ENCODE measurements at regions of chr7 and their contacts with region 1.

Region 1: DNA sequence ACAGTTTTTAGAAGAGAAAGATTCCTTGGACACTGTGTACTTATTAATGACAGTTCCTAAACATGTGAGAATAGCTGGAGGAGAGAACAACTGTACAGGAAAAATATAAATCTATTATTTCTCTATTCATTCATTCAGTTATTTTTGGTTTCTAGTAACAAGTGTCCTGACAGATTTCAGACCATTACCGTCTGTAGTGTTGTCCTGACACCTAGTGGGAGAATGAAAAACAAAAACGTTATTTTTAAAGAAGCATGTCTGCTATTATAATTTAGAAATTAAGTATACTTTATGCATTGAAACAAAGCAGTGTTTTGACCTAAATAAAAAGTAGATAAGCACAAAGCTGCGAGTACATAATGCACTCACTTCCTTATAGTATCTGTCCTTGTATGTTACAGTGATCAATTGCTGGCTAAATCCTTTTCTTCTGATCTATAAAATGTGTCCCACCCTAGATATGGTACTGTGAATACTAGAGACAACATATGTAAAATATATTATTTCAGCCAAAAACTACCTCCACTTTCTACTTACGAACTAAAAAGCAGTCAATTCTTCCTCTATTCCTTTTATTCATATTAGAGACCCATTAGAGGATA is 575.6 kb downstream of the ARL4A start:
- DNase-seq: peak in 1 of 2 experiments; percentile 40
- H3K4me3 ChIP-seq: no peak overlapping the region
- H3K4me3 Mint-ChIP-seq: no peak overlapping the region
- H3K27ac Mint-ChIP-seq: no peak overlapping the region
- H3K4me1 ChIP-seq: no peaks in the 10 kb centered on the region
- H3K4me1 Mint-ChIP-seq: no peaks in the 10 kb centered on the region
- H3K27me3 ChIP-seq: no peaks in the 10 kb centered on the region
- H3K27me3 Mint-ChIP-seq: no peaks in the 10 kb centered on the region
- CTCF ChIP-seq: peak; percentile 43 to 54

Region 2: DNA sequence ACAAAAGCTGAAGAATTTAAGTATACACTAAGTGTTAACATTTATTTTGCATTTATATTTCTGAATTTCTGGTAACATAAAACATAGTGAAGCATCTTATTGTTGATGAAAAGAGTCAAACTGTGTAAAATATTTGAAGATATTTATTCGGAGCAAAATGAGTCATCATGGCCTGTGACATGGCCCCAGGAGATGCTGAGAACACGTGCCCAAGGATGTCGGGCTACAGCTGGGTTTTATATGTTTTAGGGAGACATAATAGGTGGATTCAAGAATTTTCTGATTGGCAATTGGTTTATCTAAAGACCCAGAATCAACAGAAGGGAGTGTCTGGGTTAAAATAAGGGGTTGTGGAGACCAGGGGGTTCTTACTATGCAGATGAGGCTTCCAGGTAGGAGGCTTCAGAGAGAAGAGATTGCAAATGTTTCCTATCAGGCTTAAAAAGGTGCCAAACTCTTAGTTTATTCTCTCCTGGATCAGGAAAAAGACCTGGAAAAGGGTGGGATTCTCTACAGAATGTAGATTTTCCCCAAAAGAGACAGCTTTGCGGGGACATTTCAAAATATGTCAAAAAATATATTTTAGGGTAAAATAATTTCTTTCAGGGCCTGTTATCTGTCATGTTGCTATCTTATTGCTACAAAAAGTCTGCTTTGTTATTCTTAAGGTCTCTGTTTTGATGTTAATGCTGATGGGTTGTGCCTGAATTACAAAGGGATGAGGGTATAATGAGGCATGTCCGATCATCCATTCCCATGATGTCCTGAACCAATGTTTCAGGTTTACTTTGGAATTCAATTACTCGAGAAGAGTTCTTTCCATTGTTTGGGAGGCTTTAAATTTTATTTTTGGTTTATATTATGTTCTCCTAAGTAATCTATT is 933.9 kb before region 1 on chr7:
- CTCF ChIA-PET with region 1: no interaction called
- POLR2A ChIA-PET with region 1: no interaction called
- intact Hi-C with region 1: no loop called
- DNase-seq: no peak
- H3K4me3 ChIP-seq: no peak overlapping the region
- H3K4me3 Mint-ChIP-seq: no peak overlapping the region
- H3K27ac Mint-ChIP-seq: no peak overlapping the region
- H3K4me1 ChIP-seq: no peaks in the 10 kb centered on the region
- H3K4me1 Mint-ChIP-seq: no peaks in the 10 kb centered on the region
- H3K27me3 ChIP-seq: no peaks in the 10 kb centered on the region
- H3K27me3 Mint-ChIP-seq: no peaks in the 10 kb centered on the region
- CTCF ChIP-seq: no peak

Region 3: DNA sequence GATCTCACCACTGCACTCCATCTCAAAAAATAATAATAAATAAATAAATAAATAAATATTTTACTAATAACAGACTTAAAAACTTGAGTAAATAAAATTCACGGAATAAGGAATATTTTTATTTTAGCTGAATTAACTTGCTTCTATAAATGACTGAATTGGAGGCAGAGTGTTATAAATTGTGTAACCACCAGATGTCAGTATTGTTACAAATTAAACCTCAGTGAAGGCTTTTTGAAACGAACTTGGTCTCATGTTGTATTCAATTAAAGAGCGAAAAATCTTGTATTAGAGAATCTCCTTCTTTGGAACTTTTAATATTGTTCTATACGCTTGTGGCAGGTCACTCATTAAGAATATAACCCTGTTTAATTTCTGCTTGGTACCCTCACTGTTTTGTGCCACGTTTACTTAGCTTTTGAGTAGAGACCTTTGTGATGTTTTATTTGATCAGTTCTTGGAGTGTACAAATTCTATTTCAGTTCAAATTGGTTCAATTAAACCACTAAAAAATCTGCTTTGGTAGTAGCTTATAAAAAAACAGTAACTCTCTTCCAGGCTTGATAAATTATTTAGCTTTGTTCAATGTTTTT is 738.1 kb before region 1 on chr7:
- CTCF ChIA-PET with region 1: no interaction called
- POLR2A ChIA-PET with region 1: no interaction called
- intact Hi-C with region 1: loop called (anchors 1 kb)
- DNase-seq: peak in 1 of 2 experiments; percentile 23
- H3K4me3 ChIP-seq: no peak overlapping the region
- H3K4me3 Mint-ChIP-seq: no peak overlapping the region
- H3K27ac Mint-ChIP-seq: no peak overlapping the region
- H3K4me1 ChIP-seq: no peaks in the 10 kb centered on the region
- H3K4me1 Mint-ChIP-seq: no peaks in the 10 kb centered on the region
- H3K27me3 ChIP-seq: no peaks in the 10 kb centered on the region
- H3K27me3 Mint-ChIP-seq: peaks cover 8% of the 10 kb centered on the region
- CTCF ChIP-seq: peak; percentile 43 to 73

Region 4: GRCh38 chr7:13179102-13179501 is 83.9 kb before region 1 on chr7:
- CTCF ChIA-PET with region 1: no interaction called
- POLR2A ChIA-PET with region 1: no interaction called
- intact Hi-C with region 1: loop called (anchors 5 kb)
- DNase-seq: peak in 1 of 2 experiments; percentile 18
- H3K4me3 ChIP-seq: no peak overlapping the region
- H3K4me3 Mint-ChIP-seq: no peak overlapping the region
- H3K27ac Mint-ChIP-seq: no peak overlapping the region
- H3K4me1 ChIP-seq: peaks cover 19% of the 10 kb centered on the region
- H3K4me1 Mint-ChIP-seq: peaks cover 14% of the 10 kb centered on the region
- H3K27me3 ChIP-seq: no peaks in the 10 kb centered on the region
- H3K27me3 Mint-ChIP-seq: no peaks in the 10 kb centered on the region
- CTCF ChIP-seq: no peak